AG04449 (cell line): ENCODE measurements at regions of chr13 and their contacts with region 1.

Region 1: GRCh38 chr13:31236211-31236786 is 36.5 kb downstream of the B3GLCT start:
- DNase-seq: peak; percentile 17
- H3K4me3 ChIP-seq: no peak overlapping the region
- CTCF ChIP-seq: peak; percentile 45

Region 2: DNA sequence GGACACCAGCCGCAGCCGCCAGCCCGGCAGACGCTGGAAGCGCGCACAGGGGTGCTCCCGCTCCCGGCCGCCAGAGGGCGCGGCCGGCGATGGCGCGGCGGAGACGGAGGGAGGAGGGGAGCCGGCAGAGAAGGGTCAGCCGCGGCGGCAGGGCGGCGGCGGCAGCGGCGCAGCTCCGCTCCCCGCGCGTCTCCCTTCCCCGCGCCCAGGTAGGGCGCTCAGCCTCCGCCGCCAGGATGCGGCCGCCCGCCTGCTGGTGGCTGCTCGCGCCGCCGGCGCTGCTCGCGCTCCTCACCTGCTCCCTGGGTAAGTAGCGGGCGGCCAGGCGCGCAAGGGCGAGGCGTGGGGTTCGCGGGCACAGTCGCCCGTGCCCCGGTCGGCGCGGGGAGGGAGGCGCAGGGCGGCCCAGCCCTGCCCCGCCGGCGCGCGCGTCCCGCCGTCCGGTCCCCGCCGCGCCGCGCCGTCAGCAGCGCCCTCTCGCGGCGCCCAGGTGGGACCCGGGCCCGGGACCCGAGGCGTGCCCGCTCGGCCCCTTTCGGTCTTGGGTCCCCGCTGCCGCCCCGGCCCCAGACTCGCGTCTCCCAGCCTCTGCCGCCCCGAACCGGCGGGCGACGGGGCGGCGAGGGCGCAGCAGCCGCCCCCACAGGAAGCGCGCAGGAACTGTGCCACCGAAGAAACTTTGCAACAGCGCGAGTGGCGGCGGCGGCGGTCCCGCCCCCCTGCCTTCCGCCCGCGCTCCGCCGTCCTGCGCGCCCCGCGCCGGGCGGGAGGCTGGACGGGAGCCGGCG is 36.3 kb before region 1 on chr13 and contains the start of gene B3GLCT:
- CTCF ChIA-PET with region 1: interaction called, 17 read pairs
- POLR2A ChIA-PET with region 1: no interaction called
- DNase-seq: no peak
- H3K4me3 ChIP-seq: peak within 1 kb of the TSS; percentile 70
- CTCF ChIP-seq: peak; percentile 89

Region 3: DNA sequence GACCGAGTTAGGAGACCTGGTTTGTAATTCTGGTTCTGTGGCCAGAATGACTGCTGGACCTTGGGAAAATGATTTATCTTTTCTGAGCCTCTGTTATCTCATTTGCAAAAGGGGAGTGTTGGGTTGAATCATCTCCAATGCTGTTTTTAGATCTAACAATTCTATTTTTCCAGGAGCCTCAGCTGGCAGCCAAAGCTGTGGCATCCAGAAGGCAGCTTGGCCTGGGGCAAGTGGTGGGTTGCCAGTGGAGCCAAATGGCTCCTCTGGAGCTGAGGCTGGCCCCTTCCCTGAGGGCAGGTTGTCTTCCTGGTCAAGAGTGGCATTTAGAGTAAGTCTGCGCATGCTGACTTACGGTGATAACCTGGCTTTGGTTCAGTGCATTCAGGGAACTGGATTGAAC is 15.2 kb before region 1 on chr13:
- CTCF ChIA-PET with region 1: interaction called, 65 read pairs
- POLR2A ChIA-PET with region 1: no interaction called
- DNase-seq: no peak
- H3K4me3 ChIP-seq: no peak overlapping the region
- CTCF ChIP-seq: no peak

Region 4: GRCh38 chr13:31261241-31261640 is 24.9 kb after region 1 on chr13:
- CTCF ChIA-PET with region 1: interaction called, 15 read pairs
- POLR2A ChIA-PET with region 1: no interaction called
- DNase-seq: no peak
- H3K4me3 ChIP-seq: no peak overlapping the region
- CTCF ChIP-seq: no peak

Region 5: GRCh38 chr13:31424117-31424729 is 187.9 kb after region 1 on chr13:
- CTCF ChIA-PET with region 1: interaction called, 419 read pairs
- POLR2A ChIA-PET with region 1: no interaction called
- DNase-seq: peak; percentile 23
- H3K4me3 ChIP-seq: no peak overlapping the region
- CTCF ChIP-seq: peak; percentile 91

Region 6: DNA sequence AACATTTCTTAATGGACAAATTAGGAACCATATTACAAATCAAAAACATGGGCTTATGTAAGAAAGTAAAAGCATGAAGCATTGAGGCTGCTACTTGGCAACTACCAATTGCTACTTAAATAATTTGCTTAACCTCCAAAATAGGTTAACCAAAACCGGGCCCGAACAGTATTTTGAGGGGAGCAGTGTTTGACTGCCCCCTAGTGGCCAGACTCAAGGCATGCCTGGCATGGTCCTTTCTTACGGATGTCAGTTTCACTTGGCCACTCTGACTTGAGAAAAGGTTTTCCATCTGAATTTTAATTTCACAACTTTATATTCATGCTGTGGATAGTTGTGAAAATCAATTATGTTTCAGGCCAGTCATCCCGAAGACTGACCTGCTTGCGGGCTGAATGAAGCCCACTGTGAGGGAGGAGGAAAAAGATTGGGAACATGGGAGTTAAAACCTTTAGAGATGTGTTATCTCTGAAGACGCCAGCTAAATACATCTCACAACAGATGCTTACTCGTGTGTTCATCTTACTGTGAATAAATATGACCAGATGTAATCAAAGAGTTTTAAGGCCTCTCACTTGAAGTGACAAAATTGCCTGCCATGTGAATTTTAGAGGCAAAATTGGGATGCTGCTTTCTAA is 505.9 kb after region 1 on chr13:
- CTCF ChIA-PET with region 1: interaction called, 16 read pairs
- POLR2A ChIA-PET with region 1: no interaction called
- DNase-seq: no peak
- H3K4me3 ChIP-seq: no peak overlapping the region
- CTCF ChIP-seq: peak; percentile 82